ENCODE measurements at regions of chr3 and their contacts with region 1.

Region 1: GRCh38 chr3:71294919-71295318 is 288.6 kb downstream of the FOXP1 start:
- DNase-seq: no peak
- H3K4me3 Mint-ChIP-seq: no peak overlapping the region
- H3K27ac Mint-ChIP-seq: no peak overlapping the region
- H3K4me1 Mint-ChIP-seq: peaks cover 33% of the 10 kb centered on the region
- H3K27me3 Mint-ChIP-seq: no peaks in the 10 kb centered on the region

Region 2: DNA sequence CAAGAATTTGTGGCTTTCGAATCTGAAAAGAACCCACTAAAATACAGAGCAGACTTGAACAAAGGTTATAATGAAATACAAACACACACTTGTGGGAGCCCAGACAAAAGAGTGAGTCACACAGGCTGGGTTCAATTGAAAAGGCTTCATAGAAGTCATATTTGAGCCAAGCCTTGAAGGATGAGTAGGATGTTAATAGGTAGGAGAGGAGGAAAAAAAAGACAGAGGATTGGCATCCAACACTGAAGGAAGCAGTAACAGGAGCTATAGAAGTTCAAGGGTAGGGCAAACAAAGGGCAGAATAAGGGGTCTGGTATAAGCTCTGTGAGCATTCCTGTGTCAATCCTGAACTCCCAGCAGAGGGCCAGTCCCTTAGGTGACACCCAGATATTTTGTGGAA is 36.8 kb before region 1 on chr3:
- intact Hi-C with region 1: loop called (anchors 5 kb)
- DNase-seq: no peak
- H3K4me3 Mint-ChIP-seq: no peak overlapping the region
- H3K27ac Mint-ChIP-seq: peak overlapping the region; percentile 36
- H3K4me1 Mint-ChIP-seq: peaks cover 29% of the 10 kb centered on the region
- H3K27me3 Mint-ChIP-seq: no peaks in the 10 kb centered on the region

Region 3: GRCh38 chr3:72255791-72256559 is 961.1 kb after region 1 on chr3:
- intact Hi-C with region 1: no loop called
- DNase-seq: no peak
- H3K4me3 Mint-ChIP-seq: no peak overlapping the region
- H3K27ac Mint-ChIP-seq: no peak overlapping the region
- H3K4me1 Mint-ChIP-seq: peaks cover 20% of the 10 kb centered on the region
- H3K27me3 Mint-ChIP-seq: peaks cover 22% of the 10 kb centered on the region